CD4-positive, alpha-beta T cell (primary cell): ENCODE measurements at regions of chr2 and their contacts with region 1.

Region 1: DNA sequence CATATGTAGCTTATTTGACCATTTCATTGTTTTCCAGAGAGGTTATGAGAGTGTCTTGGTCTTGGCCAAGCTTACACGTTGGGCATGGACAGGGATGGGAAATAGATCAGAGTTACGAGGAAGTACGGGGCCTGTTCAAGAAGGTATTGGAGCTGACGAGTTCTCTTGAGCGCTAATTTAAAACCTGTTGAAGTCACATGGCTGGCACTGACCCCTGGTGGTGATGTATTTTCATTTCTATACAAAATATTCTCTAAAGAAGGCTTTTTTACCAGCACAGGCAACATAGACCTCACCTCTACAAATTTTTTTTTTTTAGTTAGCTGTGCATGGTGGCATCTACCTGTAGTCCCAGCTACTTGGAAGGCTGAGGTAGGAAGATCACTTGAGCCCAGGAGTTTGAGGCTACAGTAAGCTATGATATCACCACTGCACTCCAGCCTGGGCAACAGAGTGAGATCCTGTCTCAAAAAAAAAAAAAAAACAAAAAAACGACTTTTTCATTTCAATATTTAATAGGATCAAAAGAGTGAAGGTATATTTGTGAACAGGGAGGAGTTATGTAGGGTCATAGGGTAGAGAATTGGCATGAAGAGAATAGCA is 19.6 kb downstream of the UGP2 start:
- DNase-seq: peak; percentile 43 to 86 (median 56)
- ATAC-seq: peak; percentile 68
- H3K4me3 ChIP-seq: no peak overlapping the region
- H3K4me3 Mint-ChIP-seq: peak overlapping the region; percentile 17
- H3K27ac ChIP-seq: no peak overlapping the region
- H3K27ac Mint-ChIP-seq: peak overlapping the region; percentile 24
- H3K4me1 ChIP-seq: peaks cover 11% of the 10 kb centered on the region
- H3K4me1 Mint-ChIP-seq: peaks cover 39% of the 10 kb centered on the region
- H3K27me3 ChIP-seq: no peaks in the 10 kb centered on the region
- H3K27me3 Mint-ChIP-seq: no peaks in the 10 kb centered on the region
- CTCF ChIP-seq: peak; percentile 70

Region 2: DNA sequence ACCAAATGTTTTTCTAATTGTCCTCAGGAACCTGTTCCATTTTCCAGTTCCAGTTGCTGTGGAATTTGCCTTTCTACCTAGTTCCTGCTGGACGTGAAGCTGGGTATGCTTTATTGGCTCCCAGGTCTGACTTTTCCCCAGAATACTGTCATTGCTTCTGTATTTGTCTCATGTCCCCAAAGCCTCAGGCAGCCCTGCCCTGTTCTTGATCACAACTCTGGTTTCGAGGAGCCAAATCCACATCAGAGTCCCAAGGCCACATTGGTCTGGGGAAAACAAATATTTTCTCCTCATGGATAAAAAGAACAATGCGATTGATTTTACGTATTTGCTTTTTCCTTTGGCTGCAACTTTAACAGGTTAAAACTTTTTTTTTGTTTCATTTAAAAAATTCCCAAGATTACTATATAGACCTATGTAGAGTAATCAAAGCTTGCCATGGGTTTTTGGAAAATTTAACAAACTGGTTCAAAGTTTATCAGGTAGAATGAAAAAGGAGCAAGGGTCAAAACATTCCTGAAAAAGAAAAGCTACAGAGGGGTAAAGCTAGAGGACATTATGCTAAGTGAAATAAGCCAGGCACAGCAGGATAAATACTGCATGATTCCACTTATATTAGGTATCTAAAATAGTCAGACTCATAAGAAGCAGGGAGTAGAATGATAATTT is 187.3 kb before region 1 on chr2:
- CTCF ChIA-PET with region 1: no interaction called
- POLR2A ChIA-PET with region 1: no interaction called
- intact Hi-C with region 1: no loop called
- DNase-seq: no peak
- ATAC-seq: no peak
- H3K4me3 ChIP-seq: no peak overlapping the region
- H3K4me3 Mint-ChIP-seq: no peak overlapping the region
- H3K27ac ChIP-seq: no peak overlapping the region
- H3K27ac Mint-ChIP-seq: no peak overlapping the region
- H3K4me1 ChIP-seq: no peaks in the 10 kb centered on the region
- H3K4me1 Mint-ChIP-seq: peaks cover 25% of the 10 kb centered on the region
- H3K27me3 ChIP-seq: peaks cover 4 to 10% of the 10 kb centered on the region in 2 experiments
- H3K27me3 Mint-ChIP-seq: peaks cover 39% of the 10 kb centered on the region
- CTCF ChIP-seq: no peak

Region 3: GRCh38 chr2:63692002-63692606 is 169.2 kb before region 1 on chr2:
- CTCF ChIA-PET with region 1: interaction called, 25 read pairs
- POLR2A ChIA-PET with region 1: interaction called, 6 read pairs
- intact Hi-C with region 1: loop called (anchors 1 kb)
- DNase-seq: peak in 4 of 14 experiments; percentile 28 to 70 (median 60)
- ATAC-seq: peak; percentile 74
- H3K4me3 ChIP-seq: no peak overlapping the region
- H3K4me3 Mint-ChIP-seq: no peak overlapping the region
- H3K27ac ChIP-seq: no peak overlapping the region
- H3K27ac Mint-ChIP-seq: no peak overlapping the region
- H3K4me1 ChIP-seq: no peaks in the 10 kb centered on the region
- H3K4me1 Mint-ChIP-seq: no peaks in the 10 kb centered on the region
- H3K27me3 ChIP-seq: no peaks in the 10 kb centered on the region
- H3K27me3 Mint-ChIP-seq: no peaks in the 10 kb centered on the region
- CTCF ChIP-seq: peak; percentile 77

Region 4: DNA sequence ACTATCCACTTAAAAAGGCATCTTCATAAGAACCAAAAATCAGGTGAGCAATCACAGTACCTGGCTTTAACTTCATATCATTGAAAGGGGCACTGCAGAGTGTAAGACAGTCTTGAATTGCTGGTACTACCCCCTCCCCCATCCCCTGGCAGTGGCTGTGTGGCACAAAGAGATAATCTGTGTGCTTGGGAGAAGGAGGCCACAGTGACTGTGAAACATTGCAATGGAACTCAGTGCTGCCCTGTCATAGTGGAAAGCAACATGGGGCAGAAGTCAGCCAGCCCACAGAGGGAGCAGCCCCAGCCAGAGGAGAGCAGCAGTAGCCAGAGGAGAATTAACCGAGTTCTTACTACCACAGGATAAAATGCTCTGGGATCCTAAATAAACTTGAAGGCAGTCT is 65.0 kb before region 1 on chr2:
- CTCF ChIA-PET with region 1: interaction called, 4 read pairs
- POLR2A ChIA-PET with region 1: no interaction called
- intact Hi-C with region 1: loop called in 1 of 2 experiments (anchors 5 kb)
- DNase-seq: no peak
- ATAC-seq: no peak
- H3K4me3 ChIP-seq: no peak overlapping the region
- H3K4me3 Mint-ChIP-seq: no peak overlapping the region
- H3K27ac ChIP-seq: no peak overlapping the region
- H3K27ac Mint-ChIP-seq: no peak overlapping the region
- H3K4me1 ChIP-seq: no peaks in the 10 kb centered on the region
- H3K4me1 Mint-ChIP-seq: no peaks in the 10 kb centered on the region
- H3K27me3 ChIP-seq: no peaks in the 10 kb centered on the region
- H3K27me3 Mint-ChIP-seq: no peaks in the 10 kb centered on the region
- CTCF ChIP-seq: no peak

Region 5: DNA sequence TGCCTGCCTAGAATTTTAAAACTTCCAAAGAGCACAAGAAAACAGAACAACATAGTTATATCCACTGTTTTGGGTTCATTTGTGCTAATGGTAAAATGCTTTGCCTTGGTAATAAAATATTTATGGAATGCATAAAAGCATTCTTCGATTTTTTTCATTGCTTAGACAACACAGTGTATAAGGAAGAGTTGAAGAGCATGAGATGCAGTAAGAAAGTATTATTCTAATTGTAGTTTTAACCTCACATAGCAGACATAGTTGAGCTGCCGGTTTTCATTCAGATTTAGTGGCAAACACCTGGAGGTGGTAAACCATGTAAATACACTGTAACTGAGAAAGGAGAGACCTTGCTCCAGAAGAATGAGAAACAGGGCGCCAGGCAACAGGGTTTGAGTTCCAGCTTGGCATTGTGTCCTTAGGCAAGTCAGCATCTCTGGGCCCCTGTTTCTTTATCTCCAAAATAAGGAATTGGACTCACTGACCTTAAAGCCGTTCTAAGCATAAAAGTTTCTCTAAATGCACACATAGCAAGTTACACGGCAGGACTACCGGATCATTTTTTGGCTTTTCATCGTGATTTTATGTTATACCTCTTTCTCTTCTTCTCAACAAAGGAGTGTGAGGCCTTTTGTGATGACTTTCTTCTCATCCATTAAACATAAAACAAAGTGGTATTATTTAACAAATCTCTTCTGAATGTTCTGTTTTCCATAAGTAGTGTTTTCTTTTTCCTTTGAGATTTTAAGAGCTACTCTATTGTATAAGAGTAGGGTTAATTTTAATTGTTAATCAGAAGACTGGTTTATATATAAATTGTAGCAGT is 11.7 kb before region 1 on chr2:
- CTCF ChIA-PET with region 1: interaction called, 50 read pairs
- POLR2A ChIA-PET with region 1: interaction called, 6 read pairs
- intact Hi-C with region 1: no loop called
- DNase-seq: no peak
- ATAC-seq: no peak
- H3K4me3 ChIP-seq: no peak overlapping the region
- H3K4me3 Mint-ChIP-seq: no peak overlapping the region
- H3K27ac ChIP-seq: no peak overlapping the region
- H3K27ac Mint-ChIP-seq: peak overlapping the region; percentile 34
- H3K4me1 ChIP-seq: peaks cover 25% of the 10 kb centered on the region
- H3K4me1 Mint-ChIP-seq: peaks cover 91% of the 10 kb centered on the region
- H3K27me3 ChIP-seq: no peaks in the 10 kb centered on the region
- H3K27me3 Mint-ChIP-seq: no peaks in the 10 kb centered on the region
- CTCF ChIP-seq: no peak